ENCODE measurements at regions of chr1 and their contacts with region 1.

Region 1: DNA sequence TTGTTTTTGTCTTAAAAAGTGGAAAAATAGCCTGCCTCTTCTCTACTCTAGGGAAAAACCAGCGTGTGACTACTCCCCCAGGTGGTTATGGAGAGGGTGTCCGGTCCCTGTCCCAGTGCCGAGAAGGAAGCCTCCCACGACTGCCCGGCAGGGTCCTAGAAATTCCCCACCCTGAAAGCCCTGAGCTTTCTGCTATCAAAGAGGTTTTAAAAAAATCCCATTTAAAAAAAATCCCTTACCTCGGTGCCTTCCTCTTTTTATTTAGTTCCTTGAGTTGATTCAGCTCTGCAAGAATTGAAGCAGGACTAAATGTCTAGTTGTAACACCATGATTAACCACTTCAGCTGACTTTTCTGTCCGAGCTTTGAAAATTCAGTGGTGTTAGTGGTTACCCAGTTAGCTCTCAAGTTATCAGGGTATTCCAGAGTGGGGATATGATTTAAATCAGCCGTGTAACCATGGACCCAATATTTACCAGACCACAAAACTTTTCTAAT is 35.0 kb upstream of the TDRD10 start:
- DNase-seq: no peak
- H3K4me3 ChIP-seq: no peak overlapping the region
- H3K27ac ChIP-seq: no peak overlapping the region
- H3K4me1 ChIP-seq: peaks cover 16% of the 10 kb centered on the region
- H3K27me3 ChIP-seq: no peaks in the 10 kb centered on the region
- CTCF ChIP-seq: peak in 1 of 3 experiments; percentile 17
- POLR2A ChIP-seq: no peak

Region 2: DNA sequence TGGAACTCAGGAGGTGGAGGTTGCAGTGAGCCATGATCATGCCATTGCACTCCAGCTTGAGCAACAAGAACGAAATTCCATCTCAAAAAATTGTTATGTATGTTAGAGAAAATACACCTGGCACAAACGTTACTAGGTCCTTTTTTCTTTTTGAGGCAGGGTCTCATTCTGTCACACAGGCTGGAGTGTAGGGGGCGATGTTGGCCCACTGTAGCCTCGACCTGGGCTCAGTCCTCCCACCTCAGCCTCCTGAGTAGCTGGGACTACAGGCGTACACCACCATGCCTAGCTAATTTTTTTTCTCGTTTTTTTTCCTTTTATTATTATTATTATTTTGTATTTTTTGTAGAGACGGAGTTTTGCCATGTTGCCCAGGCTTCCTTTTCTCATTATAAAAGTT is 190.2 kb before region 1 on chr1:
- intact Hi-C with region 1: no loop called
- DNase-seq: no peak
- H3K4me3 ChIP-seq: no peak overlapping the region
- H3K27ac ChIP-seq: no peak overlapping the region
- H3K4me1 ChIP-seq: peaks cover 16% of the 10 kb centered on the region
- H3K27me3 ChIP-seq: no peaks in the 10 kb centered on the region
- CTCF ChIP-seq: no peak
- POLR2A ChIP-seq: no peak

Region 3: GRCh38 chr1:154288661-154289060 is 178.3 kb before region 1 on chr1:
- intact Hi-C with region 1: loop called (anchors 5 kb)
- DNase-seq: no peak
- H3K4me3 ChIP-seq: no peak overlapping the region
- H3K27ac ChIP-seq: no peak overlapping the region
- H3K4me1 ChIP-seq: no peaks in the 10 kb centered on the region
- H3K27me3 ChIP-seq: no peaks in the 10 kb centered on the region
- CTCF ChIP-seq: no peak
- POLR2A ChIP-seq: no peak

Region 4: GRCh38 chr1:154536570-154536969 is 69.6 kb after region 1 on chr1:
- intact Hi-C with region 1: no loop called
- DNase-seq: no peak
- H3K4me3 ChIP-seq: no peak overlapping the region
- H3K27ac ChIP-seq: no peak overlapping the region
- H3K4me1 ChIP-seq: no peaks in the 10 kb centered on the region
- H3K27me3 ChIP-seq: no peaks in the 10 kb centered on the region
- CTCF ChIP-seq: no peak
- POLR2A ChIP-seq: no peak